AG04449 (cell line): ENCODE measurements at regions of chr4 and their contacts with region 1.

Region 1: GRCh38 chr4:112636688-112637551 is at the starts of genes LARP7 and ZGRF1:
- DNase-seq: peak; percentile 92
- H3K4me3 ChIP-seq: peak within 1 kb of the TSS; percentile 87
- CTCF ChIP-seq: peak; percentile 86

Region 2: GRCh38 chr4:112552668-112553067 is 84.3 kb before region 1 on chr4:
- CTCF ChIA-PET with region 1: no interaction called
- POLR2A ChIA-PET with region 1: no interaction called
- DNase-seq: peak; percentile 36
- H3K4me3 ChIP-seq: no peak overlapping the region
- CTCF ChIP-seq: no peak

Region 3: DNA sequence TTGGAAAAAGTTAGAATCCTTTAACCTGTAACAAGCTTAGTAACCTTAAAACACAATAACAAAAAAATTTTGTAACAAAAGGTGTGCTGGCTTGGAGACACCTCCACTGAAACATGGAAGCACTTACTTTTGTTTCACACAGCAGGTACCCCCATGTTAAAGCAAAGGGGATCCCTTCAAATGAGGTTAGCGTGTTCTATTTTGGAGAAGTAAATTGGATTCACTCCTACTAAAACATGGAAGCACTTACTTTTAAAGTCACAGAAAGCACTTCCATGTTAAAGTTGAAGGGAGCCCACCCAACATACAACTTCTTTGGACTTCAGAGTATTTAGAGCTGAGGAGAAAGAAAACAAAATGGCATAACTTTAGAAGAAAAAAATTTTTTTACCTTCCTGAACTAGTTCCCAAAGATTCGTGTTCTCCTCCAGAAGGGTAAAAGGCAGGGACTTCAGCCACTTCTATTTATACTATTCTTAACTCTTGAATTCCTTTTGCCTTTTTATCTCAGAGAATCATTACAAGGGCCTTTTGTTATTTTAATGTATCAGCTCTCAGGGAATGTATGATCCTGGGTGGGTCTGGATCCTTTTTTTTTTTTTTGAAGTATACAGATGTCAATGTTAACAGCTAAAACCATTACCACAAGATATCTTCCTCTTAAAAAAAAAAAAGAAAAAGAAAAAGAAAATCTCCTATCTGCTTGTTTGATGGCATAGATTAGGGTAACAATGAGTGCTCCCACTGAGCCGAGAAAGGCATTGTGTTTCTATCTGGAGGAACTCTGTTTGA is 11.5 kb after region 1 on chr4:
- CTCF ChIA-PET with region 1: interaction called, 13 read pairs
- POLR2A ChIA-PET with region 1: no interaction called
- DNase-seq: no peak
- H3K4me3 ChIP-seq: no peak overlapping the region
- CTCF ChIP-seq: no peak